Activated CD4-positive, alpha-beta memory T cell treated with anti-CD3 and anti-CD28 coated beads for 36 hours (primary cell): ENCODE measurements at regions of chr15 and their contacts with region 1.

Region 1: GRCh38 chr15:53962332-53963241 is 15.7 kb upstream of the UNC13C start:
- DNase-seq: peak; percentile 37
- H3K4me3 Mint-ChIP-seq: no peak overlapping the region
- H3K27ac Mint-ChIP-seq: no peak overlapping the region
- H3K4me1 Mint-ChIP-seq: no peaks in the 10 kb centered on the region
- H3K27me3 Mint-ChIP-seq: peaks cover 4% of the 10 kb centered on the region

Region 2: DNA sequence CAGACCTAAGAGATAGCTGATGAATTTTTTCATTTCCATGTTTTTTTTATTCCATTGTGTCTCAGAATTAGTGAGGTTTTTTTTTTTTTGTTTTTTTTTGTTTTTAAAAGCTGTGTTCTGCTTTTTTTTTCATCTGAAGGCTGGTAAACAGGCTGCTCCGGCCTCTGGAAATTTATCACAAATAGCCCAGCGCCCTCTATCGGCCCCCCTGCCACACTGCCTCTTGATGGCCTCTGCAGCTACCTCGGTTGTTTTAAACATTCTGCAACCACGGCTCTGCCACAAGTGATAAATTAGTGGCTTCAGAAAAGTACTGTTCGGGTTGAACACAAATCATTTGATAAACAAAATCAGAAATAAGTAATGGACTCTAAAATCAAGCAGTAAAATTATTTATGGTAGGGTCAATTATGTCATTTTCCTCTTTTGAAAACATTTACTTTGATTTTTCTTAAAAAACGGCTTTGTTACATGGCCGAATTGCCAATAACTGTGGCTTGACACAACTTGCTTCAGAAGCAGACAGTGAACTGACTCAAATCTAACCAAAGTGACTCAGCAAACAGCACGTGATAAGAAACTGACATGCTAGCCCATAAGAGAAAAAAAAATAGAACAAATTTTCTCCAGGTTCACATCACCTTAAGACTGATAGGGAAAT is 1146.4 kb after region 1 on chr15:
- CTCF ChIA-PET with region 1: no interaction called
- POLR2A ChIA-PET with region 1: no interaction called
- intact Hi-C with region 1: loop called (anchors 10 kb)
- DNase-seq: peak; percentile 71
- H3K4me3 Mint-ChIP-seq: no peak overlapping the region
- H3K27ac Mint-ChIP-seq: no peak overlapping the region
- H3K4me1 Mint-ChIP-seq: no peaks in the 10 kb centered on the region
- H3K27me3 Mint-ChIP-seq: no peaks in the 10 kb centered on the region